Cardiac septum (tissue), 1 donor: ENCODE measurements at regions of chr12 and their contacts with region 1.

Region 1: DNA sequence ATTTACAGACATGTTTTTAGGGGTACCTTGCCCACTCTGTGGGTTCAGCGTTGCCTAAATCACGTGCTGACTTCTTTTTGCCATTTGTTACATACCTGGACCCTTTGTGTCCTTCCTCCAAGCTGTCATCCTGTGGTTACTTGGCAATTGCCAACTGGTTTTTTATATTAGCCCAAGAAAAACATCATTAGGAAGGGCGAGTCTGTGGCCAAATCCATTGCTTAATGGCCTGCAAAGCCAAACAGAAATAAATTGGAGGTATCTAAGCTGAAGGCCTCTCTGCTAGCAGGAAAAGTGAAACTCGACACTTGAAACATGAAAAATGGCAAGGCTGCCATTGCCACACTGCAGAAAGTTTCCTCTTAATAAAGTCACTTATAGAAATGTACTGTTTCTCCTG is 190.4 kb downstream of the NUAK1 start:
- DNase-seq: no peak

Region 2: GRCh38 chr12:105738051-105738450 is 210.3 kb before region 1 on chr12:
- intact Hi-C with region 1: no loop called
- DNase-seq: peak; percentile 78

Region 3: DNA sequence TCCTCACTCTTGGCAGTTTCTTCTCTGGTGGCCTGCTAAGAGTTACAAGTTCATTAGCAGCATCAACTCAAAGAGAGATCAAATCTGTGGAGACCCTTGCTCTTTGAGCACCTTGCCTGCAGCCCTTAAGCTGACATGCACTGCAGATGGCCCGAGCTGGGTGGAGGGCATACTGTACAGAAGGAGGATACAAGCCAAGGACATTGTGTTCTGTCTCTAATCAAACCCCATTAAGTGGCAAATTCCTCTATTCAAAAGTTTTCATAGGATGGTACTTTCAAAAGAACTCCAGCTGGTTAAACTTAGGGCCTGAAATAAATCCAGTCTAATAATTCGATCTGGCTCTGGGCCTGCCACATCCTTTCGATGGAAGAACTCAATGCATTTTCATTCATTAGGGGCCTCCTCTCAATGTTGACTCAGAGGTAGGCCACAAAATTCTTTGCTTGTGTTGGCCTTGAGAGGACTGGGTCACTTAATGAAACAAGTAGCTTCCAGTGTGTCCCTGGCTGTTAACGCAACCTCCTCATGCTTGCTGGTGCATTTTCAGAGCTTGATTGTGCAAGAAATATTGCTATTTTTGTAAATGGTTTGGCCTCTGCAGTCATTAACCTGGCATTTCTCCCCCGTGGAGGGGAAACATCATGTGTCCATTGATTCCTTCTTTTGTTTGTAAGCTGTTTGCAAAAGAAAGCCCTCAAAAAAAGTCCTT is 127.7 kb before region 1 on chr12:
- intact Hi-C with region 1: no loop called
- DNase-seq: no peak

Region 4: GRCh38 chr12:105922670-105923102 is 25.6 kb before region 1 on chr12:
- intact Hi-C with region 1: loop called (anchors 1 kb)
- DNase-seq: no peak

Region 5: DNA sequence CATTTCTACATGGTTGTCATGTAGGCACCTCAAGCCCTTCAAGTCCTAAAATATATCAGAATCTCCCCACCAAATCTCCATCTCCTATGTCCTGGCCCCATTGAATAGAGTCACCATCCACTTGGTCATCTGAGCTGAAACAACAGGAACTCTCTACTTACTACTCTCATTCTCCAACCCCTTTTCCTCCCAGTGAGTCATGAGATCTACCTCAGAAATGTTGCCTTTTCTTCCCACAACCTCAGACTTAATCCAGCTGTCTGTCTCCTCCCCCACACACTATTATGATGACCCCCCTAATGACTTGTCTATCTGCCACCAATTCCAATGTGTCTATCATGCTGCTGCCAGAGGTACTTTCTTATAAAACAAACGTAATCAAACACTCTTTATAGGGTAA is 935.1 kb after region 1 on chr12:
- intact Hi-C with region 1: no loop called
- DNase-seq: no peak